MCF 10A (cell line): ENCODE measurements at regions of chr1 and their contacts with region 1.

Region 1: GRCh38 chr1:152047730-152048402 is 11.1 kb upstream of the S100A11 start:
- DNase-seq: peak; percentile 100
- H3K4me3 Mint-ChIP-seq: peak overlapping the region; percentile 62
- H3K27ac Mint-ChIP-seq: peak overlapping the region; percentile 98
- H3K4me1 Mint-ChIP-seq: peaks cover 55% of the 10 kb centered on the region
- H3K27me3 Mint-ChIP-seq: no peaks in the 10 kb centered on the region
- CTCF ChIP-seq: peak; percentile 58

Region 2: GRCh38 chr1:151993654-151994496 is 54.0 kb before region 1 on chr1 and contains the start of gene S100A10:
- CTCF ChIA-PET with region 1: no interaction called
- POLR2A ChIA-PET with region 1: interaction called, 64 read pairs
- intact Hi-C with region 1: loop called (anchors 5 kb)
- DNase-seq: peak; percentile 86
- H3K4me3 Mint-ChIP-seq: peak within 1 kb of the TSS; percentile 89
- H3K27ac Mint-ChIP-seq: peak within 1 kb of the TSS; percentile 96
- H3K4me1 Mint-ChIP-seq: peaks cover 54% of the 10 kb centered on the region
- H3K27me3 Mint-ChIP-seq: no peaks in the 10 kb centered on the region
- CTCF ChIP-seq: no peak
- total RNA-seq, gene S100A10: 1,693 and 1,694 TPM in 2 replicates

Region 3: GRCh38 chr1:152104859-152105258 is 57.0 kb after region 1 on chr1:
- CTCF ChIA-PET with region 1: interaction called, 28 read pairs
- POLR2A ChIA-PET with region 1: interaction called, 45 read pairs
- intact Hi-C with region 1: no loop called
- DNase-seq: peak; percentile 54
- H3K4me3 Mint-ChIP-seq: no peak overlapping the region
- H3K27ac Mint-ChIP-seq: no peak overlapping the region
- H3K4me1 Mint-ChIP-seq: peaks cover 5% of the 10 kb centered on the region
- H3K27me3 Mint-ChIP-seq: peaks cover 13% of the 10 kb centered on the region
- CTCF ChIP-seq: no peak

Region 4: GRCh38 chr1:152141974-152142584 is 94.2 kb after region 1 on chr1:
- CTCF ChIA-PET with region 1: interaction called, 66 read pairs
- POLR2A ChIA-PET with region 1: interaction called, 15 read pairs
- intact Hi-C with region 1: loop called (anchors 1 kb)
- DNase-seq: peak; percentile 94
- H3K4me3 Mint-ChIP-seq: no peak overlapping the region
- H3K27ac Mint-ChIP-seq: no peak overlapping the region
- H3K4me1 Mint-ChIP-seq: peaks cover 8% of the 10 kb centered on the region
- H3K27me3 Mint-ChIP-seq: peaks cover 8% of the 10 kb centered on the region
- CTCF ChIP-seq: peak; percentile 93

Region 5: DNA sequence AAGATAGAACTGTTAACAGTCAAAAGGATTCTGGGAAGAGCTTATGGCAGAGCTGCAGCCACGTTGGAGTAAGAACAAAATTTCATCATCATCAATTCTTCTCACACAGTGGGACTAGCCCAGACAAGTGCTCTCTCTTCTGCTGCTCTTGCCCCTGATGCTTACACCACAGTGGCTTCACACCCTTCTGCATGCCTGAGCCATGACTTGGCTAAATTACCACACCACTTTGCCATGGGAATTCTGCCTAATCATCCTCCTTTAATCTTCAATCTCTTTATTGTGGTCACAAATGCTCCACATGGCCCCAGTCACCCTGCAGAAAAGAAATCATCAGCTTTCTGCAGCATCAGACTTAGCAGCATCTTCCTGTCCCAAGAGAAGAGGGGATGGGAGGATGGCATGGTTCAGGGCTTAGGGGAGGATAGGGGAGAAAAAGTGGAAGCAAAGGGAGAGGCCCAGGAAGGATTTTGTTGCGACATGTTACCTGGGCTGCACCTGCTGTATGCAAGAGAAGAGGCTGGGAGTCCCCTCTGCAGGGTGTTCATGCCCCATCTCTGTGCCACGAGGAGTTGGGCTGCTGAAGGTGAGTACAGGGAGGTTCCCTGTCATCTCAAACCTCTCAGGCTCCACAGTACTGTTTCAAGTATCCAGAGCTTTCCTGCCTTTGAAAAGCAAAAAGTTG is 120.1 kb after region 1 on chr1:
- CTCF ChIA-PET with region 1: interaction called, 28 read pairs
- POLR2A ChIA-PET with region 1: interaction called, 66 read pairs
- intact Hi-C with region 1: no loop called
- DNase-seq: peak; percentile 100
- H3K4me3 Mint-ChIP-seq: peak overlapping the region; percentile 49
- H3K27ac Mint-ChIP-seq: peak overlapping the region; percentile 99
- H3K4me1 Mint-ChIP-seq: peaks cover 70% of the 10 kb centered on the region
- H3K27me3 Mint-ChIP-seq: no peaks in the 10 kb centered on the region
- CTCF ChIP-seq: no peak

Region 6: GRCh38 chr1:152347116-152347728 is 299.4 kb after region 1 on chr1:
- CTCF ChIA-PET with region 1: interaction called, 8 read pairs
- POLR2A ChIA-PET with region 1: interaction called, 4 read pairs
- intact Hi-C with region 1: loop called (anchors 1 kb)
- DNase-seq: peak; percentile 90
- H3K4me3 Mint-ChIP-seq: no peak overlapping the region
- H3K27ac Mint-ChIP-seq: no peak overlapping the region
- H3K4me1 Mint-ChIP-seq: no peaks in the 10 kb centered on the region
- H3K27me3 Mint-ChIP-seq: peaks cover 43% of the 10 kb centered on the region
- CTCF ChIP-seq: peak; percentile 98